PC-9 (cell line): ENCODE measurements at regions of chr15 and their contacts with region 1.

Region 1: GRCh38 chr15:50945725-50946124 is 37.2 kb downstream of the AP4E1 start:
- DNase-seq: no peak
- H3K4me3 ChIP-seq: no peak overlapping the region
- H3K27ac ChIP-seq: no peak overlapping the region
- H3K4me1 ChIP-seq: no peaks in the 10 kb centered on the region
- H3K27me3 ChIP-seq: no peaks in the 10 kb centered on the region
- CTCF ChIP-seq: no peak

Region 2: GRCh38 chr15:50653156-50653745 is 292.5 kb before region 1 on chr15:
- CTCF ChIA-PET with region 1: no interaction called
- POLR2A ChIA-PET with region 1: no interaction called
- intact Hi-C with region 1: no loop called
- DNase-seq: no peak
- H3K4me3 ChIP-seq: no peak overlapping the region
- H3K27ac ChIP-seq: no peak overlapping the region
- H3K4me1 ChIP-seq: no peaks in the 10 kb centered on the region
- H3K27me3 ChIP-seq: no peaks in the 10 kb centered on the region
- CTCF ChIP-seq: no peak

Region 3: GRCh38 chr15:51132384-51133139 is 186.8 kb after region 1 on chr15:
- CTCF ChIA-PET with region 1: no interaction called
- POLR2A ChIA-PET with region 1: no interaction called
- intact Hi-C with region 1: no loop called
- DNase-seq: peak in 1 of 2 experiments; percentile 13
- H3K4me3 ChIP-seq: no peak overlapping the region
- H3K27ac ChIP-seq: no peak overlapping the region
- H3K4me1 ChIP-seq: no peaks in the 10 kb centered on the region
- H3K27me3 ChIP-seq: no peaks in the 10 kb centered on the region
- CTCF ChIP-seq: peak; percentile 71

Region 4: GRCh38 chr15:51281368-51281967 is 335.7 kb after region 1 on chr15:
- CTCF ChIA-PET with region 1: interaction called, 15 read pairs
- POLR2A ChIA-PET with region 1: no interaction called
- intact Hi-C with region 1: no loop called
- DNase-seq: peak in 1 of 2 experiments; percentile 26
- H3K4me3 ChIP-seq: no peak overlapping the region
- H3K27ac ChIP-seq: no peak overlapping the region
- H3K4me1 ChIP-seq: no peaks in the 10 kb centered on the region
- H3K27me3 ChIP-seq: peaks cover 12% of the 10 kb centered on the region; the same call in 1 of the 2 replicates
- CTCF ChIP-seq: peak; percentile 58; the same call in 1 of the 2 replicates